AG04449 (cell line): ENCODE measurements at regions of chr17 and their contacts with region 1.

Region 1: DNA sequence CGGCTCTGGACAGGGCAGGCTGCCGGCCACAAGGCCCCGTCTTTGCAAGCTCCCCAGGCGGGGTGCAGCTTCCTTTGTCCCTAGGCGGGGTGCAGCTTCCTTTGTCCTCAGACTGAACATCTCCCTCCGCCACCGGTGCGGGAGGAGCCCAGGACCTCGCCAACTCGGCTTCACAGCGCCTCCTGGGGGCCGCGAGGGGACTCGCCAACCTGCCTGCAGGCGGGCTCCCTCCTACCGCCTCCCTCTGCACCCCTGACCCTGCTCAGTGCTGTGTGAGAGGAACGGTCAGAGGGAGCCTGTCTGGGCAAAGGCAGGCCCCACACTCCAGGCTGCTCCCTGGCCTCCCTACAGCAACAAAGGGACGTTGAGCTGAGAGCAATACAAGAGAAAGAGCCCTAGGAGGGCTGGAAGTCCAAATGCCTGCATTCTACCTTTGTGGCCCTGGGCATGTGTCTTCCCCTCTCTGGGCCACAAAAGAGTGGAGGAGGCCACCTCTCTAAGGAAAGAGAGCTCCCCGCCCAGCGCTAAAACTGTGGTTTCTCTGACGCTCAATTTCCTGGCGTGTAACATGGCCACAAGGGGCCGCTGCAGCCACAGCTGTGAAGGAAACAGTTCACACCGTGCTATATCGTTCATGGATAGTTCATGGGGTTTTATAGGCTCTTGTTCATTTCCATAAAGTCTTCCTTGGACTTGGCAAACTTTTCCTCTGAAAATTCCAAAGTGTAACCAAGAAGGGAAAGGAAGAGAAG is 20.9 kb upstream of the KRT19 start:
- DNase-seq: peak; percentile 38
- H3K4me3 ChIP-seq: peak overlapping the region; percentile 19
- CTCF ChIP-seq: peak; percentile 99

Region 2: DNA sequence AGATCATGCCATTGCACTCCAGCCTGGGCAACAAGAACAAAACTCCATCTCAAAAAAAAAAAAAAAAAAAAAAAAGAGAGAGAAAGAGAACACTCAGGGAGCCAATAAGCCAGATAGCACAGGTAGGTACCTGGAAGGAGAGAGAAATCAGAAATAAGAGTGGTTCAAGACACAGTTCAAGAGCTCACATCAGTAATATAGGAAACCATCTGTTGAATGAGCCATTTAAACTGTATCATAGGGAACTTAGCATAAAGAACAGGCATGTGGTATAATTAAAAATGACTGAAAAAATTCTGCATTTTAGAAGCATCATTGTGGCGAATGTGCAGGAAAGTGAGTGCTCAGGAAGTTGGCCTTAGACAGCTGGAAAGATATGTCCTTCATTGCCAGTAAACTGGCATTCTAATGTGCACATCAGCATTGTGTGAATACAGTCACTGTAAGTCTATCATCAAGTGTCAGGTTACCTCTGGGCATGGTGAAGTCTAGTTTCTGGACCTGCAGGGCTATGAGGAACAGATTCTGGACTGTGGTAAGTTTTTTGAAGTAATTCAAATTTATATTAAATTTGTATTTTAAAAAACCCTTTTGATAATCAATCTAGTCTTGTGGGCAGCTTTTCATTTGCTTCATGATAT is 702.4 kb before region 1 on chr17:
- CTCF ChIA-PET with region 1: interaction called, 14 read pairs
- POLR2A ChIA-PET with region 1: no interaction called
- DNase-seq: no peak
- H3K4me3 ChIP-seq: no peak overlapping the region
- CTCF ChIP-seq: no peak

Region 3: DNA sequence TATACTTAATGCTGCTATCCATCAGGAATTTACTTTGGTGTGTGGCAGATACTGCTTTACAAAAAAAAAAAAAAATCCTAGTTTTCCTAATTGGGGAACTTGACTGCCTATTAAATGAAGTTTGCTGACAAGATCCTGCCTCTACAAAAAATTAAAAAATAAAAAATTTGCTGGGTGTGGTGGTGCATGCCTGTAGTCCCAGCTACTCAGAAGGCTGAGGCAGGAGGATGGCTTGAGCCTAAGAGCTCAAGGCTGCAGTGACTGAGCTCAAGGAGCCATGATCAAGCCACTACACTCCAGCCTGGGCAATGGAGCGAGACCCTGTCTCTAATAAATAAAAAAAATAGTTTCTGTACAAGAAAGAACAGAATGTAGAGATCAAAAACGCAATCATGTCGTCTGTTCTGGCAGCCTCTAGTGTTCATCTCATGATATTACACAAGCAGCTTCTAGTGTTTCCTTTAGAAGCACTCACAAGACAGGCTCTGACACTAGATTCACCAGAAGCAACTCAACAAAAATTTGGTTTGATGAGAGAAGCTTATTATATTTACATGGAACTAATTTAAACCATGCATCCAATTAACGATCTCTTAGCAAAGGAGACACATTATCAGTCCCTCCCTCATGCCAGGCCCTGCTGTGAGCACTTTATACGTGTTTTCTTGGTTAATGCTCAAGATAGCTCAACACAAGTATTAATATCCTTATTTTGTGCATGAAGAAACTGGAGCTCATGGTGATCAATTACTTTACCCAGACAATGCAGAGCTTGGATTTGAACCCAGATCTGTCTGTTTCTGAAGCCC is 226.7 kb before region 1 on chr17:
- CTCF ChIA-PET with region 1: interaction called, 23 read pairs
- POLR2A ChIA-PET with region 1: no interaction called
- DNase-seq: peak; percentile 24
- H3K4me3 ChIP-seq: no peak overlapping the region
- CTCF ChIP-seq: peak; percentile 72

Region 4: DNA sequence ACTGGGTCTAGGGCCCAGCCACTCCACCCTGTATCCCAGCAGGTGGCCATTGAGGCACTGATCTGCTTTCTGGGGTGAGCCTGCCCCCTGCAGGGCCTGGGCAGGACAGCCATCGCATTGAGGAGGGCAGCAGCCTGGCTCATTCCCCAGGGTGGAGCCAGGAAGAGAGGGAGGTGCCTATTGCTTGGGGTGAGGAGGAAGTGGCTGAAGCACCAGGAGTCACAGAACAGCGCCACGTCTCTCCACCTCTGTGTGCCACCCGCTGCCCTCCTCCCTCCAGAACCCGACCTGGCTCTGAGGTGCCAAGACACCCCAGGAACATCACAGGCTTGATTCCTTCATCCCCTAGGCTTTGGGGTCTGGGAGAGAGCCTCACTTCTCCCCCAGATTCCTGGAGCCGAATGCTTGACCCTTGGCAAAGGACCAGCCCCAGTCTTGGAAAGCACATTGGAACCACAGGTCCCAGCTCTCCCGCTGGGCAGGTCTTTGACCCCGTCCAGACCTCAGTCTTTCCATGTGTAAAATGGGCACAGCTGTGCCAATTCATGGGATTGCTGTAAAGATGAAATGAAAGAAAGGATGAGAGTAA is 52.1 kb before region 1 on chr17:
- CTCF ChIA-PET with region 1: interaction called, 42 read pairs
- POLR2A ChIA-PET with region 1: interaction called, 3 read pairs
- DNase-seq: peak; percentile 37
- H3K4me3 ChIP-seq: no peak overlapping the region
- CTCF ChIP-seq: peak; percentile 96

Region 5: DNA sequence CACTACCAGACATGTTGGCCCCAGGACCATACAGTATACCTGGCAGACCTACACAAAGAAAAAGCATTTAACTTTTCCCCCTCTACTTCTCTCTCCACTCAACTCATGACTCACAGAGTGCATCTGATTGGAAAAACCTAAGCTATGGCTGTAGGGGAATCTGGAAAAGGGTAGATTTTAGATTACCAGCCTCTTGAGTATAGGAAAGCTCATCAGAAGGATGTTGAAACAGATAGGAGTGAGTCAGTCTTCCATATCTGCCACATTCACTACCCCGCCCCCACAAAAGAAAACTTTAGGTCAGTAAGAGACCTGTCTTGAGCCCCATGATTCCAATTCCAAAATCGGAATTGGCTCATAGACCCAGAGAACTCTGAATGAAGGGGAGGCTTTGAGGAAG is 10.5 kb after region 1 on chr17:
- CTCF ChIA-PET with region 1: interaction called, 180 read pairs
- POLR2A ChIA-PET with region 1: no interaction called
- DNase-seq: no peak
- H3K4me3 ChIP-seq: no peak overlapping the region
- CTCF ChIP-seq: no peak

Region 6: DNA sequence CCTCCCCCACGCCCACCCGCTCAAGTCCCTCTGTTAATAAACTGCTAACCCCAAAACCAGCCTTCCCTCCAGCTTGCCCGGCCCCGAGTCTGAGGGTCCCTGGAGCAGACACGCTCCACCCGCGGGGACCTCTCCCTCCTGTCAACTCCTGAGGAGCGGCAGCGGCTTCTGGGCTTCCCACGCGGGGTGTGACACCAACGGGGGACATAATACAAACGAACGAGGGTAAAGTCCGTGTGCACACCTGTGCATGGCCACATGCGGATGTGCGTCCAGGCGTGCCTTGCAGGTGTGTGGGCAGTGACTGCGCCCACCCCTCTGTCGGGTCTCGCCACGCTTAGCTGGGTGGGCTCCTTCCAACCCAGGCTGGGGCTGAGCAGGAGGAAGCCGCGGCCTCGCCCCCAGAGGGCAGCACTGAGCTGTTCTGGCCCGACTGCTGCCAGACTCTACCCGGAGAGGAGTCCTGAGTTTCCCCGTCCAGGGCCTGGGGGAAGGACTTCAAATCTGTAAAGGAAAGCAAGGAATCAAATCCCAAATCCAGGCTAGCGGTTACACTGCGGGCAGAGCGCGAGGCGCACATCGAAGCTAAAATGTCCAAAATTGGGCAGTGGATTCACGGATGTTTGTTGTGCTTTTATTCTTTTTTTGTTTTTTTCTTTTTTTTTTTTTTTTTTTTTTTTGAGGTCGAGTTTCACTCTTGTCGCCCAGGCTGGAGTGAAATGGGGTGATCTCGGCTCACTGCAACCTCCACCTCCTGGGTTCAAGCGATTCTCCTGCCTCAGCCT is 99.6 kb after region 1 on chr17:
- CTCF ChIA-PET with region 1: interaction called, 554 read pairs
- POLR2A ChIA-PET with region 1: interaction called, 5 read pairs
- DNase-seq: no peak
- H3K4me3 ChIP-seq: peak overlapping the region; percentile 50
- CTCF ChIP-seq: peak; percentile 95

Region 7: GRCh38 chr17:41792845-41793783 is 244.1 kb after region 1 on chr17:
- CTCF ChIA-PET with region 1: no interaction called
- POLR2A ChIA-PET with region 1: no interaction called
- DNase-seq: no peak
- H3K4me3 ChIP-seq: no peak overlapping the region
- CTCF ChIP-seq: no peak